Activated B cell treated with CpG ODN at 0.5 μM for 24 hours (primary cell): ENCODE measurements at regions of chr9 and their contacts with region 1.

Region 1: GRCh38 chr9:99819856-99820684 is 1.6 kb upstream of the NR4A3 start:
- DNase-seq: no peak
- ATAC-seq: peak; percentile 53
- H3K4me3 Mint-ChIP-seq: peak overlapping the region; percentile 96
- H3K27ac Mint-ChIP-seq: peak overlapping the region; percentile 97
- H3K4me1 Mint-ChIP-seq: peaks cover 42% of the 10 kb centered on the region
- H3K27me3 Mint-ChIP-seq: no peaks in the 10 kb centered on the region
- CTCF ChIP-seq: no peak

Region 2: GRCh38 chr9:99221621-99222415 is 598.3 kb before region 1 on chr9 and contains the starts of genes ALG2 and SEC61B:
- CTCF ChIA-PET with region 1: no interaction called
- POLR2A ChIA-PET with region 1: interaction called, 56 read pairs
- intact Hi-C with region 1: loop called (anchors 1 kb)
- DNase-seq: peak; percentile 84
- ATAC-seq: peak; percentile 89
- H3K4me3 Mint-ChIP-seq: peak within 1 kb of the TSS; percentile 97
- H3K27ac Mint-ChIP-seq: peak within 1 kb of the TSS; percentile 100
- H3K4me1 Mint-ChIP-seq: peaks cover 72% of the 10 kb centered on the region
- H3K27me3 Mint-ChIP-seq: no peaks in the 10 kb centered on the region
- CTCF ChIP-seq: no peak
- total RNA-seq, gene ALG2: 51.9 and 54.4 TPM in 2 replicates
- total RNA-seq, gene SEC61B: 200 and 243 TPM in 2 replicates

Region 3: DNA sequence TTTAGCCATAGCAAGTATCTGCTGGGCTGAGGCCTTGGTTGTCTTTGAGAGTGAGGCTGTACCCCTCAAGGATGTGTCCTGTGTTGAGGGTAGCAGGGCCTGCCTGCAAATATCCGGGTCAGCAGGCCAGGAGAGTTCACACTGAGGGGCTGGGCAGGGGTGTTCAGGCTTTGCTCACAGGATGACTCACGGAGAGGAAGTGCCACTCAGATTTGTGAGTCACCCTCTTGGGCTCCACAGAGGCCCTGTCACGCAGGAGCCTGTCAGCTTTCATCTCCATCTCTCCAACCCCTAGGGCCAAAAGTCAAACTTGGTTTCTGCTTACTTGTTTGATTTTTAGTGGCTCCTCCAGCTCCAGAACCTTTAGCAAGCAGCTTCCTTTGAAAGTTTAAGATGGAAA is 386.5 kb before region 1 on chr9:
- CTCF ChIA-PET with region 1: no interaction called
- POLR2A ChIA-PET with region 1: interaction called, 8 read pairs
- intact Hi-C with region 1: loop called (anchors 5 kb)
- DNase-seq: peak; percentile 47
- ATAC-seq: peak; percentile 99
- H3K4me3 Mint-ChIP-seq: peak overlapping the region; percentile 4
- H3K27ac Mint-ChIP-seq: peak overlapping the region; percentile 78
- H3K4me1 Mint-ChIP-seq: peaks cover 18% of the 10 kb centered on the region
- H3K27me3 Mint-ChIP-seq: no peaks in the 10 kb centered on the region
- CTCF ChIP-seq: no peak

Region 4: GRCh38 chr9:99736291-99736690 is 83.8 kb before region 1 on chr9:
- CTCF ChIA-PET with region 1: no interaction called
- POLR2A ChIA-PET with region 1: no interaction called
- intact Hi-C with region 1: no loop called
- DNase-seq: no peak
- ATAC-seq: no peak
- H3K4me3 Mint-ChIP-seq: no peak overlapping the region
- H3K27ac Mint-ChIP-seq: no peak overlapping the region
- H3K4me1 Mint-ChIP-seq: peaks cover 7% of the 10 kb centered on the region
- H3K27me3 Mint-ChIP-seq: peaks cover 11% of the 10 kb centered on the region
- CTCF ChIP-seq: no peak

Region 5: DNA sequence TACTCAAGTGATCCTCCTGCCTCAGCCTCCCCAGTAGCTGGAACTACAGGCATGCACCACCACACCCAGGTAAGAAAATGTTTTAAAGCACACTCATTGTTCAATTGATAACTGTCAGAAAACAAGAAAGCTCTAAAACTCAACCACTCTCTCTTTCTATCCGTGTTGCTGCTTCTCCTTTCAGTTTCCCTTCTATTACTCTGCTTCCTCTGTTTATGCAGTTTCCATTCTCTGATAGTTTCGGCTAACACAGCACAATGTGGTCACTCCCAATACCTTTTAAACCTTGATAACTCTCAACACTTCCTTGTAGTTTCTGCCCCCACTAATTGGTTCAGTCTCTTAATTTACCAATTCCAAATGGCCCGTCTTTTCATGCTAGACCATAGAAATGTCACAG is 57.6 kb before region 1 on chr9:
- CTCF ChIA-PET with region 1: no interaction called
- POLR2A ChIA-PET with region 1: no interaction called
- intact Hi-C with region 1: no loop called
- DNase-seq: no peak
- ATAC-seq: peak; percentile 98
- H3K4me3 Mint-ChIP-seq: no peak overlapping the region
- H3K27ac Mint-ChIP-seq: no peak overlapping the region
- H3K4me1 Mint-ChIP-seq: no peaks in the 10 kb centered on the region
- H3K27me3 Mint-ChIP-seq: no peaks in the 10 kb centered on the region
- CTCF ChIP-seq: no peak

Region 6: GRCh38 chr9:99807276-99807852 is 12.7 kb before region 1 on chr9:
- CTCF ChIA-PET with region 1: interaction called, 4 read pairs
- POLR2A ChIA-PET with region 1: interaction called, 8 read pairs
- intact Hi-C with region 1: loop called (anchors 1 kb)
- DNase-seq: no peak
- ATAC-seq: peak; percentile 65
- H3K4me3 Mint-ChIP-seq: no peak overlapping the region
- H3K27ac Mint-ChIP-seq: peak overlapping the region; percentile 5
- H3K4me1 Mint-ChIP-seq: peaks cover 28% of the 10 kb centered on the region
- H3K27me3 Mint-ChIP-seq: no peaks in the 10 kb centered on the region
- CTCF ChIP-seq: no peak

Region 7: GRCh38 chr9:100084734-100085133 is 264.7 kb after region 1 on chr9:
- CTCF ChIA-PET with region 1: no interaction called
- POLR2A ChIA-PET with region 1: interaction called, 5 read pairs
- intact Hi-C with region 1: loop called (anchors 1 kb)
- DNase-seq: no peak
- ATAC-seq: peak; percentile 65
- H3K4me3 Mint-ChIP-seq: peak overlapping the region; percentile 78
- H3K27ac Mint-ChIP-seq: peak overlapping the region; percentile 94
- H3K4me1 Mint-ChIP-seq: peaks cover 87% of the 10 kb centered on the region
- H3K27me3 Mint-ChIP-seq: no peaks in the 10 kb centered on the region
- CTCF ChIP-seq: no peak

Region 8: GRCh38 chr9:100352727-100353505 is 532.8 kb after region 1 on chr9 and contains the start of gene TEX10:
- CTCF ChIA-PET with region 1: no interaction called
- POLR2A ChIA-PET with region 1: no interaction called
- intact Hi-C with region 1: loop called (anchors 2 kb)
- DNase-seq: peak; percentile 89
- ATAC-seq: peak; percentile 93
- H3K4me3 Mint-ChIP-seq: peak within 1 kb of the TSS; percentile 90
- H3K27ac Mint-ChIP-seq: peak within 1 kb of the TSS; percentile 87
- H3K4me1 Mint-ChIP-seq: peaks cover 67% of the 10 kb centered on the region
- H3K27me3 Mint-ChIP-seq: no peaks in the 10 kb centered on the region
- CTCF ChIP-seq: no peak
- total RNA-seq, gene TEX10: 26.5 and 28.7 TPM in 2 replicates